AG04449 (cell line): ENCODE measurements at regions of chr17 and their contacts with region 1.

Region 1: DNA sequence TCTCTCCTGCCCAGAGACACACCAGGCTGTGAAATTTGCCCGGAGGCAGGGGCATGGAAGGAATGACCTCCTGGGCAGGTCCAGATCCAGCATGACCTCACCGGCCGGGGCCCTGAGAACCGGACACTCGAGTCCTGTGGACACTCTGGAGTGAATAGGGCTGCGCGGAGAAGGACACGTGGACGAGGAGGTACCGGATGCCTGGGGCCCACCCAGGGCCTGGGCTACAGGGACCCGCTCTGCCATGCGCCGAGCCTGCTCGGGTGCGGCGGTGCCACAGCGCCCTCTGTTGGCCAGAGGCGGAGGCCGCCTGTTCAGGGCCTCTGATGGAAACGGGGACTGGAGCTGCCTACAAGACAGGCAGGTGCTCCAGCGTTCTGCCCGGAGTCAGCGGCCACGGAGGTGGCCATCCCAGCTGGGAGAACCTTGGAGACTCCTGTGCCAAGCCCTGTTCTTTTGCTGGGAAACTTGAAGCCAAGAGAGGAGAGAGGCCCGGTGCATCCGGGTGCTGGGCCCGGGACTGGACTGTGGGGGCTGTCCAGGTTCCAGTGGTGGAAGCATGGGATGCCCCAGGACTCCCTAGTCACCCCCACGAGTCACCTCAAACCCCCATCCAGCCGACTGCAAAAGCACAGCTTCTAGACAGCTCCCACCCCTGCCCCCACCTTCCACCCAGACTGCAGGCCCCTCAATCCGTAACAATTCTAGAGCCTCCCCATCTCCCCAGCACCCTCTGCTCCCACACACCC is 19.3 kb upstream of the NXPH3 start:
- DNase-seq: no peak
- H3K4me3 ChIP-seq: no peak overlapping the region
- CTCF ChIP-seq: peak; percentile 99

Region 2: GRCh38 chr17:49267912-49268311 is 288.5 kb before region 1 on chr17:
- CTCF ChIA-PET with region 1: no interaction called
- POLR2A ChIA-PET with region 1: no interaction called
- DNase-seq: no peak
- H3K4me3 ChIP-seq: no peak overlapping the region
- CTCF ChIP-seq: no peak

Region 3: DNA sequence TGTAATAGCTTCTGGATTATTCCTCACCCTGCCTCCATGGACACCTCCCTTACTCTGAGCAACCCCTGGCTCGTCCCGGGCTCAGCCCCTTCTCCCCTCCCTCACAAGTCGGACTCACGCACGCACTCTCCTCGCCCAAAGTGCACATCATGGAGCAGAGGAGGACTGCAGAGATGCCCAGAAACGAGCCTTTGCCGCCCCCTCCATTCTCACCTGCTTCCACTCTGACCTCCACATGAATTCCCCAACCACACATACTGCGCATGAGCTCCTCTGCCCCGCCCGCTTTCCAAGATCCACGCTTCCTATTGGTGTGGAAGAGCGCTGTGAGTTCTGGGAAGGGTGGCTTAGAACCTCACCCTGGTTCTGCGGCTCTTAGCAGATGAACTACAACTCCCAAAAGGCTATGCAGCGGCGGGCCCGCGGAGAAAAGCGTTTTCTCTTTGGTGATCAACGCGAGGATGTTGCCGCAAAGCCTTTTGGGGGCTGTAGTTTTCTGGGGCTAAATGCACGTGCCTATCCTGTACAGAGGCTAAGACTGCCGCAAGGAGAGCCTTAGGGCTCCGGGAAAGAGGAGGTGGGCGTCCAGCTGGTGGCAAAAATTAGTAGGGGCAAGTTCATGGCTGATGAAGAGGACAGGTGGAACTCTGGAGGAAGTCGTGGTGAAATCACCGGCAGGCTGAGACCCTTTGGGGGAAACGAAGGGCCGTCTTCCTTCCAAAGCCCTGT is 141.6 kb before region 1 on chr17 and contains the start of gene PHB1:
- CTCF ChIA-PET with region 1: interaction called, 210 read pairs
- POLR2A ChIA-PET with region 1: no interaction called
- DNase-seq: peak; percentile 83
- H3K4me3 ChIP-seq: peak within 1 kb of the TSS; percentile 100
- CTCF ChIP-seq: no peak

Region 4: DNA sequence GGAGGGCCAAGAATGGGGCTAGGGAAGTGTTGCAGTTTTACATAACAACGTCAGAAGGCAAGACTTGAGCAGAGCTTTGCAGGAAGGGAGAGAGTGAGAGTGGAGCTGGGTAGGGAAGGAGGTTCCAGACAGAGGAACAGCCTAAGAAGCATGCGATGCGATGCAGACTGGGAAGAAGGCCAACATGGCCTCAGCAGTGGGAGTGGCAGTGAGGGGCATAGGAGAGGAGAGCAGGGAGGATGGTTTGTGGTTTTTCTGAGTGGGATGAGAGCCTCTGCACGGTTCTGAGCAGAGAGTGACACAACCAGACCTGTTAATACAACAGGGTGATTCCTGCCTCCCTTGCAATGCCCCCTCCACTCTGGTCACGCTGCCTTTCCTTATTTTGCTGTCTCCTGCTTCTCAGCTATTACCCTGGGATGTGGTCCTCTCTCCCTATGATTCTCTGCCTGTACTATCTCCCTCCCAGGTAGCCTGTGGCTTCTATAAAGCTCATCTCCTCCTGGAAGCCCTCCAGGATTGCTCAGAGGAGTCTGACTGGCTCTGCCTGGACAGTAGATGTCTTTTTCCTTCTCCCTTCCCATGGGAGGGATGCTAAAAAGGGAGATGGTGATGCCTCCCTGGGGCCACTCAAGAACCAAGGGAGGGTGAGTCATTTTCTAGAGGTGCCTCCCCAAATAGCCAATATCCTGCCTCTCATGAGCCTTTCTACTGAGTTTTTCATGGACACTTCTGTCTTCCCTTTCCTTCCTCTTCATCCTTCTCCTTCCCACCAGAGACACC is 100.0 kb before region 1 on chr17:
- CTCF ChIA-PET with region 1: interaction called, 23 read pairs
- POLR2A ChIA-PET with region 1: no interaction called
- DNase-seq: peak; percentile 46
- H3K4me3 ChIP-seq: no peak overlapping the region
- CTCF ChIP-seq: no peak

Region 5: DNA sequence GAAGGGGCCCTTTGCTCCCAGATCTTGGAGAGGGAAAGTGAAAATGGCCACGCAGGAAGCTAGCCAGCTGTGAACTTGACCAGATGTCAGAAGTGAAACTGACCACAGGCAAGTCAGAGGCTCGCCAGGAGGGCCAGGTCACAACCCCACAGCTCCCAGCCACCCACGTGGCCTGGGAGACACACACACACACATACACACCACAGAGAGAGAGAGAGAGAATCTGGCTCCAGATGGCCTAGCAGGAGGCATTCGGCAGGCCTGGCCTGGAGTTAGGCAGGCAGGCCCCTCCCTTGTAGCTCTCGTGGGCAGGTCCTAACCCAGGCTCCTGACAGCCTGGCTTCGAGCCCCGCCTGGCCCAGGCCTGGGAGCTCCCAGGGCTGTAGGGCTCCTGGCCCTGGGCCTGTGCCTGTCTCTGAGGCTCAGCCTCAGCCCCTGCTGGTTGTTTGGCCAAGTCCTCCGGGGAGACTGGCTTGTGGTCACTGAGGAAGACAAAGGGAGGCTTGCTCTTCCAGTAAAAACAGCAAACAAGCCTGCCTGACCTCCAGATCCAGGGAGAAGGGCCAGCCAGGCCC is 41.1 kb before region 1 on chr17:
- CTCF ChIA-PET with region 1: interaction called, 39 read pairs
- POLR2A ChIA-PET with region 1: no interaction called
- DNase-seq: peak; percentile 41
- H3K4me3 ChIP-seq: no peak overlapping the region
- CTCF ChIP-seq: peak; percentile 23

Region 6: GRCh38 chr17:49687878-49688491 is 131.6 kb after region 1 on chr17:
- CTCF ChIA-PET with region 1: interaction called, 15 read pairs
- POLR2A ChIA-PET with region 1: no interaction called
- DNase-seq: no peak
- H3K4me3 ChIP-seq: no peak overlapping the region
- CTCF ChIP-seq: no peak

Region 7: DNA sequence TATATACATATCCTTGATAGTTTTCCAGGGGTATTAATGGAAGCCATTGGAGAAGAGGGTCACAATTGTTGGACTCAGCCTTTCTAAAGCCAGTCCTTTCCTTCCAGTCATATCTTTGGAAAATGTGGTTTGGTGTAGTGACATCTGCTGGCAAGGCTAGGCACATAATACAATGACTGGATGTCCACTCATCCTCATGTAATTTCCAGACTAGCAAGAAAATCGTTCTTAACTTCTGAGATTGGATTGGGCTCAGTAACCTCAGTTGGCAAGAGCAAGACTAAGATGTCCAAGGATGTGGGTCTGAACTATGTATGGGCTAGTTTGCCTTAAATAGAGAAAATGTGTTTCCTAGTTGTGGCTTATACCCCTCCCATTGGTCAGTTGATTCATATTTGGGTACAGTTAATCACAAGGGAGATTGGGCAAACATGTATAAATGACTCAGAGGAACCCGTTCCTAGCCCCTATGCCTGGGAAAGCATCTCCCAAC is 223.4 kb after region 1 on chr17:
- CTCF ChIA-PET with region 1: interaction called, 17 read pairs
- POLR2A ChIA-PET with region 1: no interaction called
- DNase-seq: peak; percentile 62
- H3K4me3 ChIP-seq: no peak overlapping the region
- CTCF ChIP-seq: peak; percentile 62